ENCODE measurements at regions of chr14 and their contacts with region 1.

Region 1: GRCh38 chr14:93914278-93914677 is 12.9 kb upstream of the FAM181A start:
- DNase-seq: no peak
- H3K4me3 ChIP-seq: no peak overlapping the region
- H3K27ac ChIP-seq: no peak overlapping the region
- H3K4me1 ChIP-seq: no peaks in the 10 kb centered on the region
- H3K27me3 ChIP-seq: no peaks in the 10 kb centered on the region
- CTCF ChIP-seq: no peak
- EP300 ChIP-seq: no peak
- POLR2A ChIP-seq: no peak
- RAD21 ChIP-seq: no peak

Region 2: DNA sequence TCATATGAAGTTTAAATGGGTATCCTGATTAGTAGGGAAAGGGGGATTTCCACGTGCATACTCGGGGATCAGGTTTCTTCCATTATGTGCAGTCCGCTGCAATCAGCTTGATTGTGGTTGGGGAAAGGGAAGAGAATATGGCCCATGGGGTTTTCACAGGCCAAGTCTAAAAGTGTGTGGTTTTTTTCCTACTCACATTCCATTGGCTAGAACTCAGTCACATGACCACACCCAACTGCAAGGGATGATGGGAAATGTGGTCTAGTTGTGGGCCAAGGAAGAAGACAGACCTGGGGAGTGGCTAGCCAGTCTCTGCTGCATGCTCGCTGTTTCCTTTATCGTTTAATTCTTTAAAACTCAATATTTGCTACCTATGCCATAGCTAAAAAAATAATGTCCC is 231.1 kb before region 1 on chr14:
- CTCF ChIA-PET with region 1: no interaction called
- POLR2A ChIA-PET with region 1: no interaction called
- DNase-seq: peak in 1 of 2 experiments; percentile 54
- H3K4me3 ChIP-seq: no peak overlapping the region
- H3K27ac ChIP-seq: no peak overlapping the region
- H3K4me1 ChIP-seq: peaks cover 5 to 19% (median 14%) of the 10 kb centered on the region in 4 experiments; a peak in 5 of 7 replicates
- H3K27me3 ChIP-seq: no peaks in the 10 kb centered on the region
- CTCF ChIP-seq: no peak
- EP300 ChIP-seq: no peak
- POLR2A ChIP-seq: no peak
- RAD21 ChIP-seq: no peak

Region 3: GRCh38 chr14:93926873-93927799 is 12.9 kb after region 1 on chr14 and contains the start of gene FAM181A:
- CTCF ChIA-PET with region 1: interaction called, 12 read pairs
- POLR2A ChIA-PET with region 1: no interaction called
- DNase-seq: no peak
- H3K4me3 ChIP-seq: no peak within 1 kb of the TSS
- H3K27ac ChIP-seq: no peak within 1 kb of the TSS
- H3K4me1 ChIP-seq: peaks cover 0 to 5% (median 0%) of the 10 kb centered on the region in 4 experiments; a peak in 1 of 7 replicates
- H3K27me3 ChIP-seq: no peaks in the 10 kb centered on the region
- CTCF ChIP-seq: no peak
- EP300 ChIP-seq: no peak
- POLR2A ChIP-seq: no peak
- RAD21 ChIP-seq: no peak
- total RNA-seq, gene FAM181A: not detected in 2 replicates

Region 4: DNA sequence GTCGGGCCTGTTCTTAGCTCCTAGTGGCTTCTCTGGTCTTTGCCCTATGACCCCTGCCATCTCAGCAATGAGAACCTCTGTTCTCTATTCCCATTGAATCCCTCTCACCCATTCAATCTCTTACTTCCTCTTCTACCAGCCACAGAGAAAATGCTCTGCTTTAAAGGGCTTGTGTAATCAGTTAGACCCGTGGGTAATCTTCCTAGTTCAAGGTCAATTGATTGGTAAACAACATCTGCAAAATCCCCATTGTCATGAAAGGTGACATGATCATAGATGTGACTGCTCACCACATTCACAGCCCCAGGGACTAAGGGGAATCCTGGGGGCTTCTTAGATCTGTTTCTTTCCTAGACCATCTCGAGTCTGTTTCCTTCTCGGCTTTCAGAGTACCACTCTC is 75.7 kb after region 1 on chr14:
- CTCF ChIA-PET with region 1: no interaction called
- POLR2A ChIA-PET with region 1: no interaction called
- DNase-seq: no peak
- H3K4me3 ChIP-seq: no peak overlapping the region
- H3K27ac ChIP-seq: no peak overlapping the region
- H3K4me1 ChIP-seq: peaks cover 0 to 9% (median 6%) of the 10 kb centered on the region in 4 experiments; a peak in 4 of 7 replicates
- H3K27me3 ChIP-seq: no peaks in the 10 kb centered on the region; a peak in 1 of 7 replicates
- CTCF ChIP-seq: no peak
- EP300 ChIP-seq: no peak
- POLR2A ChIP-seq: no peak
- RAD21 ChIP-seq: no peak